SK-N-SH (cell line): ENCODE measurements at regions of chr17 and their contacts with region 1.

Region 1: GRCh38 chr17:50949989-50950881 is 84.1 kb upstream of the TOB1 start:
- DNase-seq: peak; percentile 86
- H3K4me3 ChIP-seq: peak overlapping the region in 1 of 2 experiments; percentile 15; a peak in 1 of 4 replicates
- H3K27ac ChIP-seq: peak overlapping the region; percentile 81 to 82
- H3K4me1 ChIP-seq: peaks cover 43 to 81% of the 10 kb centered on the region in 2 experiments
- H3K27me3 ChIP-seq: no peaks in the 10 kb centered on the region
- CTCF ChIP-seq: peak; percentile 95
- EP300 ChIP-seq: peak in 1 of 2 experiments; percentile 33; a peak in 1 of 4 replicates
- RAD21 ChIP-seq: peak; percentile 95

Region 2: DNA sequence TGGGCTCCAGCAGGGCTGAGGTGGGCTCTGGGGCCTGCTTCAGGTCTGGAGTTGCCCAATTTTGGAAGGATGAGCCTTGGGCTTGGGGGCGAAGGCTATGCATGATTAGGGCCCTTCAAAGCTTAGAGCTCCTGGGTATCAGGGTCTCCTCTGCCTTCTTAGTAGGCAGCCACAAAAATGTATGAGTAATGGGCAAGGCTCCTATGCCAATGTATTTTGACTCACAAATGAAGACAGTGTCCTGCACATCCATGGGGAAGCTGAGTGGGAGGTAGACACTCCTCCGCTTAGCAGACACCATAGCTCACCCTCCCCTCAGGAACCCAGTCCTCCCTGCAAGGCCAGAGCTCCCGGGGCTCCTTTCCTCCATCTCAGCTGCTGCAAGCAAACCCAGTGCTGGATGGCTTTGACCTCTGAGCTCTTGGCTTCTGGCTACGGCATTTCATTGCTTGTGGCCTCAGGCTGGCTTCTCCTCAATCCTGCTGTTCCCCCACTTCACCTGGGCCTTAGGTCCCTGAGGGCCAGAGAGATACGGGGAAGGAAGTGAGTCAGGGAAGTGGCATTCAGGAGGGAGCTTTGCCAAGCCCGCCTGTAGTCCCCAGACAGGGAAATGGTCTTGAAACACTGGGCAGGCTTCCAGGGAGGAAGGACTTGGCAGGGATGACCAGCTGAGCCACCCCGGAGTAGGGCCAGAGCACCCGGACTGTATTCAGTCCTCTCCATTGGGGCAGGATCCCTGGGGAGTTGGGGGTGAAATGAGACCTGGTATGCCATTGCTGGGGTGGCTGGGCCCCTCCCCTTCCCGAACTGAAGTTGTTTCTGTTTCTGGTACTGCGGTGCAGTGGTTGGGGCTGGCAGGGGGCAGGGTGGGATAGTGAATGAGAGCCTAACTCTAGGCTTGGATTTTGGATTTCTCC is 311.1 kb before region 1 on chr17:
- CTCF ChIA-PET with region 1: no interaction called
- POLR2A ChIA-PET with region 1: no interaction called
- DNase-seq: peak; percentile 81
- H3K4me3 ChIP-seq: peak overlapping the region; percentile 4 to 43; a peak in 3 of 4 replicates
- H3K27ac ChIP-seq: peak overlapping the region; percentile 88 to 97
- H3K4me1 ChIP-seq: peaks cover 41 to 60% of the 10 kb centered on the region in 2 experiments; a peak in 3 of 4 replicates
- H3K27me3 ChIP-seq: no peaks in the 10 kb centered on the region
- CTCF ChIP-seq: no peak
- EP300 ChIP-seq: peak; percentile 65 to 94
- RAD21 ChIP-seq: peak; percentile 12; the same call in 1 of the 2 replicates

Region 3: DNA sequence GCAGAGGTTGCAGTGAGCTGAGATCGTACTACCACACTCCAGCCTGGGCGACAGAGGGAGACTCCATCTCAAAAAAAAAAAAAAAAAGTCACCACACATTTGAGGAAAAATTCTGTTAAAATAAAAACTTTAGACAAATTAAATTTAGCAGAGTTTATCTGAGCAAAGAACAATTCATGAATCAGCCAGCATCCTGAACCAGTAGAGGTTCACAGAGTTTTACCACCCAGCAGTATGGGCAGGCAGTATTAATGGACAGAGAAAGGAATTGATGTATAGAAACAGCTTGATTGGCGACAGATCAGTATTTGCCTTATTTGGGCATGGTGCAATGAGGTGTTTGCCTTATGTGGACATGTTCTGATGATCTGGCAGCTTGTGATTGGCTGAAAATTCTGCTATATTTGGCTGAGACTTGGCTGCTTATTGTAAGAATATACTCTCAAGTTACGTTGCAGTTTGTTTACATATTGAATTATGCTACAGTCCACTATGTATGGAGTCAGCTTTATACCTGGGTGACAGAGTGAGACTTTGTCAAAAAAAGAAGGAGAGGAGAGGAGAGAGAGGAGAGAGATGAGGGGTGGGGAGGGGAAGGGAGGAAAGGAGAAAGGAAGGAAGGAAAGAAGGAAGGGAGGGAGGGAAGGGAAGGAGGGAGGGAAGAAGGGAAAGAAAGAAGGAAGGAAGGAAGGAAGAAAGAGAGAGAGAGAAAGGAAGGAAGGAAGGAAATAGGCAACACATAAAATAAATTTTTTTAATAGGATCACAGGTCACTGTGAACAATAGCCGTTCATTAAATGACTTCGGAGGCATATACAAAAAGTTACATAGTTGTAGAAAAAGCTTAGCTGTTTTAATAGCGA is 301.0 kb before region 1 on chr17:
- CTCF ChIA-PET with region 1: no interaction called
- POLR2A ChIA-PET with region 1: no interaction called
- DNase-seq: no peak
- H3K4me3 ChIP-seq: no peak overlapping the region
- H3K27ac ChIP-seq: no peak overlapping the region
- H3K4me1 ChIP-seq: no peaks in the 10 kb centered on the region
- H3K27me3 ChIP-seq: no peaks in the 10 kb centered on the region
- CTCF ChIP-seq: no peak
- EP300 ChIP-seq: no peak
- RAD21 ChIP-seq: no peak

Region 4: DNA sequence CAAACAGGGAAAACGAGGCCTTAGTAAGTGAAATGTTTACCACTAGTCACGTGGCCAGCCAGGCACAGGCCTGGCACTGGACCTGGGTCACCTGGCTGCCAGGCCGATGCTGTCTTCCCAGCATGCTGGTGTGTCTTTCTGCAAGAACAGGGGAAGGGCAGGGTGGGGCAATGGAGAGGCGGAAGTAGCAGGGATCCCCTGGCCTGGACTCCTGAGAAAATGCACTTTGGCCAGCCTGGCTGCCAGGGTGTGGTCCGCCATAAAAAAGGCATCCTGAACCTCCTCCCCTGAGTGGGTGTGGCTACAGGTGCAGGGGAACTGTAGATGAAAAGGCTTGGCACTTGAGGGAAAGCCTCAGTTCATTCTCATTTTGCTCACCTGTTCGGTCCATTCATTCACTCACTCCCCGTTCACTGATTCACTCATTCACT is 181.9 kb before region 1 on chr17:
- CTCF ChIA-PET with region 1: no interaction called
- POLR2A ChIA-PET with region 1: no interaction called
- DNase-seq: no peak
- H3K4me3 ChIP-seq: no peak overlapping the region
- H3K27ac ChIP-seq: no peak overlapping the region
- H3K4me1 ChIP-seq: peaks cover 0 to 24% of the 10 kb centered on the region in 2 experiments; a peak in 2 of 4 replicates
- H3K27me3 ChIP-seq: no peaks in the 10 kb centered on the region
- CTCF ChIP-seq: no peak
- EP300 ChIP-seq: no peak
- RAD21 ChIP-seq: no peak

Region 5: DNA sequence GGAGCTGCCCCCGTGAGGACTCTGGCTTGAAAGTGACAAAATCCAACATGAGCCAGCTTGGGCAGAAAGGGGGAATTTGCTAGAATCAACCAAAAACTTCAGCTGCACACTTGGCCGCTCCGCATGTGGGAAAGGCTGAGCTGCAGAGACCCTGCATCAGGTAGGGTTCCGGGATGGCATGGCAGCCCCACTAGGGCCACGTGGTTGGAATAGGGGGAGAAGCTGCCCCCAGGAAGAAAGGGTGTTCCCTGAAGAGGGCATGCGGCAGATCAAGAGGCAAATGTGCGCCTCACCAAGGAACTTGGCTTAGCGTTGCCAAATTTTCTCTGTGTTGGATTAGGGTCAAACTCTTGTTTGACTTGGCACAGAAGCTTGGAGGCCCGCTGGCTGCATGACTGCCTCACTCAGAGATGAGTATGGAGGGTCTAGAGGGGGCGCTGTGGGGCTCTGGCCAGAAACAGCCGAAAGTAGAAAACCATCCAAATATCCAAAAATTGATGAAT is 144.0 kb before region 1 on chr17:
- CTCF ChIA-PET with region 1: no interaction called
- POLR2A ChIA-PET with region 1: no interaction called
- DNase-seq: no peak
- H3K4me3 ChIP-seq: no peak overlapping the region
- H3K27ac ChIP-seq: no peak overlapping the region
- H3K4me1 ChIP-seq: no peaks in the 10 kb centered on the region
- H3K27me3 ChIP-seq: no peaks in the 10 kb centered on the region
- CTCF ChIP-seq: peak; percentile 48
- EP300 ChIP-seq: no peak
- RAD21 ChIP-seq: no peak

Region 6: DNA sequence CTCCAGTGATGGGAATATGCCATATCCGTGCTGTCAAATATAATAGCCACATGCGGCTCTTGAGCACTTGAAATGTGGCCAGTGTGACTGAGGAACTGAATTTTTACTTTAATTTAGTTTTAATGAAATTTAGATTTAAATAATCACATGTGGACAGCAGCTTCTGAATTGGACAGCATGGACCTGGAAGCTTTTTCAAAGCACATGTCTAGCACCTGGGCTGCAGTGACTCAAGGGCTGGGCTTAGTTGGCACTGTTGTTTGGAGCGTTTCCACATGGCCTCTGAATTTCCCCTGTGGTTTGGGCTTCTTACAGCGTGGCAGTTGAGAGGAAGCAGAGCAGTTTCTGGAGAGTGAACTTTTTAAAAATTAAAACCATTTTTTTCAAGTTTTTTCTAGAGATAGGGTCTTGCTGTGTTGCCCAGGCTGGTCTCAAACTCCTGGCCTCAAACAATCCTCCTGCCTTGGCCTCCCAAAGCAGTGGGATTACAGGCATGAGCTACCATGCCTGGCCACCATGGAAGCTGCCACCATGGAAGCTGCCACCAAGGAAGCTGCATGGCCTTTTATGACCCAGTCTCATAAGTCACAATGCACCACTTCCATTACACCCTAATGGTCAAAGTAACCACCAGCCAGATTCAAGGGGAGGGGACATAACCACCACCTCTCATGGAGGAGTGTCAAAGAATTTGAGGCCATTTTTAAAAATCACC is 77.4 kb before region 1 on chr17:
- CTCF ChIA-PET with region 1: interaction called, 820 read pairs
- POLR2A ChIA-PET with region 1: interaction called, 609 read pairs
- DNase-seq: no peak
- H3K4me3 ChIP-seq: no peak overlapping the region
- H3K27ac ChIP-seq: peak overlapping the region in 1 of 2 experiments; percentile 84; a peak in 2 of 4 replicates
- H3K4me1 ChIP-seq: peaks cover 0 to 30% of the 10 kb centered on the region in 2 experiments; a peak in 2 of 4 replicates
- H3K27me3 ChIP-seq: no peaks in the 10 kb centered on the region
- CTCF ChIP-seq: no peak
- EP300 ChIP-seq: peak; percentile 16 to 39; a peak in 2 of 4 replicates
- RAD21 ChIP-seq: no peak

Region 7: DNA sequence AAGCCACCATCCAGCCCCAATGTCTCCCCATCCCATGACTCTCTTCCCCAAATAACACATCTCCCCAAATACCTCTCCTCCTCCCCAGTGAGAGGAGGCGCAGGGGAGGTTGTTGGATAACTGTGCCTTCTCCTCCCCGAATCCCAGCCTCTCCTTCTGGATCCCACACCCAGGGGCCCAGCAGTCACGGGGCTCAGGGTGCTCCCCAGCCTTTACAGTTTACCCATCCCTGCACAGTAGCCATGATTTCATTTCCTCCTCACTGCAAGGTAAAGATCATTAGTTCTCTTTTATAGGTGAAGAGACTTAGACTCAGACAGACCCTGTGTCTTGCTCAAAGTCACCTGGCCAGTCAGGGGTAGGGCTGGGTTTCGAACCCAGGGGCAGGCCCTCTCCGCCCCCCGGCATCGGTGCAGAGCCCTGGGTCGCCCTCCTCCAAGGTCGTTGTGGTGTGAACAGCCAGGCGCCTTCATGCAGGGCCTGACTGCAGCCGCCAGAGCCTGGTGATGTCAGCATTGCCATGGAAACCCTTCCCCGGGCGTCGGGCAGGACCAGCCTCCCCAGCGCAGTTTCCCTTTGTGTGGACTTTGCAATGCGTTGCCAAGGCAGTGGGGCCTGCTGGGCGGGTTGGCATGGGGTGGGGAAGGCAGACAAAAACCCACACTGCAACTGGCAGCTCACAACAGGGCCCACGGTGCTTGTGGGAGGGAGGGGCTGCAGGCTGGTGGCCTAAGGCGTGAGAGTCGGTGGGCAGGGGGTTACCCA is 30.7 kb before region 1 on chr17:
- CTCF ChIA-PET with region 1: interaction called, 34 read pairs
- POLR2A ChIA-PET with region 1: interaction called, 9 read pairs
- DNase-seq: peak; percentile 99
- H3K4me3 ChIP-seq: no peak overlapping the region
- H3K27ac ChIP-seq: peak overlapping the region; percentile 80 to 96
- H3K4me1 ChIP-seq: peaks cover 28 to 39% of the 10 kb centered on the region in 2 experiments
- H3K27me3 ChIP-seq: no peaks in the 10 kb centered on the region
- CTCF ChIP-seq: no peak
- EP300 ChIP-seq: peak in 1 of 2 experiments; percentile 68; a peak in 1 of 4 replicates
- RAD21 ChIP-seq: peak; percentile 43; the same call in 1 of the 2 replicates